Activated T-helper 1 cell treated with anti-CD3 and anti-CD28 coated beads, Interleukin-12 subunit alpha, Interleukin-12 subunit beta, Interleukin-2, Interleukin-4 antibody, amounts not matched to agents 30 ng/mL and 10 ng/mL and 1 ng/mL, durations not matched to agents 14 hours and 24 hours and 36 hours (primary cell): ENCODE measurements at regions of chr4 and their contacts with region 1.

Region 1: DNA sequence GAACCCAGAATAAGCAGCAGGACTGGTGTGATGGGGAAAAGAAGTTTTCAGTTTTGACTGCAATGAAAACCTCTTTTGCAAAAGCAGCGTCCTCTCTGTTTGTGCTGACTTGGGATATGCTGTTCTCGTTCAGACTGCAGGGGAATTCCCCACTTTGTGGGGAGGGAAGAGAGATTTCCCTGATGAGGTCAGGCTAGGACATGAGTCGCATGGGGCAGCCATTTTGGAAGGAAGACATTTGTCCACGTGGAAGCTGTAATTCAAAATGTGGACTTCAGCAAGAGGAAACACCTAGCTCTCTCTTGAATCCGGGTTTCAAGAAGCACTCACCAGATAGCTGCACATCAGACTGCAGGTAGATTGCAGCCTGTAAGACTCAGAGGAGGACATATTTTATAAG is 39.3 kb downstream of the ING2 start:
- DNase-seq: no peak
- H3K4me3 Mint-ChIP-seq: no peak overlapping the region
- H3K27ac Mint-ChIP-seq: no peak overlapping the region
- H3K4me1 Mint-ChIP-seq: no peaks in the 10 kb centered on the region
- H3K27me3 Mint-ChIP-seq: peaks cover 6% of the 10 kb centered on the region

Region 2: GRCh38 chr4:183517781-183518180 is 26.3 kb before region 1 on chr4:
- intact Hi-C with region 1: loop called (anchors 1 kb)
- DNase-seq: no peak
- H3K4me3 Mint-ChIP-seq: no peak overlapping the region
- H3K27ac Mint-ChIP-seq: no peak overlapping the region
- H3K4me1 Mint-ChIP-seq: no peaks in the 10 kb centered on the region
- H3K27me3 Mint-ChIP-seq: peaks cover 7% of the 10 kb centered on the region

Region 3: GRCh38 chr4:183580370-183580769 is 36.3 kb after region 1 on chr4:
- intact Hi-C with region 1: no loop called
- DNase-seq: no peak
- H3K4me3 Mint-ChIP-seq: no peak overlapping the region
- H3K27ac Mint-ChIP-seq: no peak overlapping the region
- H3K4me1 Mint-ChIP-seq: no peaks in the 10 kb centered on the region
- H3K27me3 Mint-ChIP-seq: peaks cover 6% of the 10 kb centered on the region